ENCODE measurements at regions of chr9 and their contacts with region 1.

Region 1: GRCh38 chr9:27726244-27727081 is 153.2 kb upstream of the C9orf72 start:
- DNase-seq: peak in 2 of 3 donors; percentile 38 to 80
- ATAC-seq: peak; percentile 67
- H3K4me3 ChIP-seq: no peak overlapping the region
- H3K4me1 ChIP-seq: no peaks in the 10 kb centered on the region
- CTCF ChIP-seq: peak; percentile 58

Region 2: GRCh38 chr9:27785714-27786100 is 59.2 kb after region 1 on chr9:
- intact Hi-C with region 1: no loop called
- DNase-seq: no peak
- ATAC-seq: no peak
- H3K4me3 ChIP-seq: no peak overlapping the region
- H3K4me1 ChIP-seq: no peaks in the 10 kb centered on the region
- CTCF ChIP-seq: no peak

Region 3: DNA sequence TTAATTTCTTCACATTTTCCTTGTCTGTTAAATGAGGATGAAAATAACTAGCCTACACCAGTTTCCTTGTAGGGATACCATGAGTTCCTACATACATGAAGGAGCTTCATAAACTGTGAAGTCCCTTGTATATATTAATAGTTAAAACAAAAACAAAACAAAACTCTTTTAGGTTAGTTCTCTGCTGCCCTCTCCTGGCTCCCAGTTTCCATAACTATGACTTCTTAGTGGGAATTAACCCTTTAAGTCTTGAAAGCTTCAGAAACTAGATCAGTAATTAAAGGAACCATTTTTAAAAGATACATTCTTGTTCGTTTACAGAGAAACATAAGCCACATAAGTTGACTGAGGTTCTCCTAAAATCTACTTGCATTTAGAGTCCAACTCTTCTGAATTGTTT is 346.8 kb after region 1 on chr9:
- intact Hi-C with region 1: loop called in 1 of 2 experiments (anchors 10 kb)
- DNase-seq: peak in 1 of 3 donors; percentile 61
- ATAC-seq: no peak
- H3K4me3 ChIP-seq: no peak overlapping the region
- H3K4me1 ChIP-seq: no peaks in the 10 kb centered on the region
- CTCF ChIP-seq: no peak